Adrenal gland (tissue), 19 donors: ENCODE measurements at regions of chr5 and their contacts with region 1.

Region 1: DNA sequence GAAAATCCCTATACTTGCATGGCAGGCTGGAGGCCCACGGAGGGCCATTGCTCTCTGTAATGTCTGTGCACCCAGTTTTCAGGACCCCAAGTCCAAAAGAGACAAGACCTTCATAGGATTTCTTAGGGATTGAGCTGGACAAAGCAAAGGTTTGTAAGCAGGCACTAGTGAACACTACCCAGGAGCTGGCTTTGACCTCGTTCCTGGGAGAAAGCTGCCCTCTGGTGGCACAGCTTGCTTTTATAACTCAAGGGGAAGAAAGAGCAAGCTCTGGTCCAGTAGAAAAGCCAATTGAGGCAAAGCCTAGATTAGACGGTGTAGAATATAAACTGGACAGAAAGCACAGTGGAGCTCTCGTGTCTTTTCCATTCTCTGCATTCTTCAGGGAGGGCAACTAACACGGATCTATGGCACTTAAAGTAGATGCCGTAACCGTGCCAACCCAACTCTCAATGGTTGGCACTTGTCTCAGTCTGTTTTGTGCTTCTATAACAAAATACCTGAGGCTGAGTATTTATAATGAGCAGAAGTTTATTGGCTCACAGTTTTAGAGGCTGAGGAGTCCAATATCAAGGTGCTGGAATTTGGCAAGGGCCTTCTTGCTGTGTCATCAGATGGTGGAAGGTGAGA is 7.9 kb downstream of the GABRP start:
- DNase-seq: peak; percentile 62 to 87 (median 76)
- H3K4me3 ChIP-seq: no peak overlapping the region
- H3K27ac ChIP-seq: no peak overlapping the region
- H3K4me1 ChIP-seq: no peaks in the 10 kb centered on the region
- H3K27me3 ChIP-seq: no peaks in the 10 kb centered on the region
- CTCF ChIP-seq: peak; percentile 30 to 71 (median 58)
- POLR2A ChIP-seq: no peak

Region 2: DNA sequence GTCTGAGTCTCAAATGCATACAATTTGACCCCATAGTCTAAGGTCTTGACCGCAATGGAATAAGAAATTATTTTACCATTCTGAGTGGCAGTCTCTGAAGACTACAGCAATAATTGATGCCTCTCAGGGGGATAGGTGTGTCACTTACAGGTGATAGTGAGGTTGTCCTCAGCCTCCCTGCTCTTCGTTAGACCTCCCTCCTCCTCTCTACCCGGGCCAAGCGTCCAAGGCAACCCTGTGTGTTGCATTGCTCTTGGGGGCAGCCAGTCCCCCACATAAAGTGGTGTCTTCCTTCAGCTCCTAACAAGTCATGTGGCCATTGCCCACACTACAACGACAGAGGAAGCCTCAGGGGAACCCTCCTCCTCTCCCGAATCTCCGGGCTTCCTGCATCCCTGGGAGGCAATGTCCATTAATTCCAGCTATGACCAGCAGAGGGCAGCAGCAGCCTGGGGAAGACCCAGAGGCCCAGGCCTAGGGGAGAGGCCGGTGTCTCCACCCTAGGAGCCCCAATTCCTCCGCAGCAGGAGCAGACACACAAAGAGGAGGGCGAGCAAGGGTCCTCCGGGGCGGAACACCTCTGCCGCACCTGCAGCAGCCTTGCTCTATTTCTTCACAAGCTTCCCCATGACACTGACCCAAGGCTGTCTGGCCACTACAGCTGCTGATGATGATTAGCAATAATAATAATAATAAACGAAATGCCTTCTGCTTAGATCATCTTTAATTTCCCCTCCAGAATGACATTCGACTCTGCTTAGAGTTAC is 152.8 kb before region 1 on chr5:
- intact Hi-C with region 1: loop called (anchors 2 to 10 kb)
- DNase-seq: peak; percentile 65 to 85 (median 72)
- H3K4me3 ChIP-seq: no peak overlapping the region
- H3K27ac ChIP-seq: no peak overlapping the region
- H3K4me1 ChIP-seq: peaks cover 5 to 18% of the 10 kb centered on the region in 2 donors
- H3K27me3 ChIP-seq: peaks cover 4% of the 10 kb centered on the region
- CTCF ChIP-seq: peak; percentile 72 to 93 (median 82)
- POLR2A ChIP-seq: no peak

Region 3: GRCh38 chr5:170861837-170862766 is 70.7 kb after region 1 on chr5 and contains the start of gene RANBP17:
- intact Hi-C with region 1: no loop called
- DNase-seq: peak; percentile 57 to 74 (median 73)
- H3K4me3 ChIP-seq: peak within 1 kb of the TSS; percentile 27 to 94 (median 72)
- H3K27ac ChIP-seq: peak within 1 kb of the TSS in 3 of 5 donors; percentile 63 to 77 (median 72)
- H3K4me1 ChIP-seq: peaks cover 0 to 12% of the 10 kb centered on the region in 2 donors
- H3K27me3 ChIP-seq: no peaks in the 10 kb centered on the region
- CTCF ChIP-seq: peak in 1 of 6 experiments; percentile 18
- POLR2A ChIP-seq: peak in 1 of 2 donors; percentile 51
- total RNA-seq, gene RANBP17: 9.8 to 119 (median 26.3) TPM